GM13976 (cell line): ENCODE measurements at regions of chr5 and their contacts with region 1.

Region 1: GRCh38 chr5:97142521-97143254 is at the start of gene LIX1:
- DNase-seq: peak; percentile 50
- CTCF ChIP-seq: peak; percentile 44

Region 2: GRCh38 chr5:96093890-96094381 is 1048.8 kb before region 1 on chr5:
- in situ Hi-C with region 1: no loop called
- DNase-seq: no peak
- CTCF ChIP-seq: no peak

Region 3: GRCh38 chr5:96868603-96869371 is 273.9 kb before region 1 on chr5:
- in situ Hi-C with region 1: loop called (anchors 10 kb)
- DNase-seq: peak; percentile 44
- CTCF ChIP-seq: peak; percentile 88

Region 4: GRCh38 chr5:98341038-98342032 is 1198.6 kb after region 1 on chr5:
- in situ Hi-C with region 1: no loop called
- DNase-seq: no peak
- CTCF ChIP-seq: no peak